Common myeloid progenitor, CD34-positive (primary cell): ENCODE measurements at regions of chr7 and their contacts with region 1.

Region 1: DNA sequence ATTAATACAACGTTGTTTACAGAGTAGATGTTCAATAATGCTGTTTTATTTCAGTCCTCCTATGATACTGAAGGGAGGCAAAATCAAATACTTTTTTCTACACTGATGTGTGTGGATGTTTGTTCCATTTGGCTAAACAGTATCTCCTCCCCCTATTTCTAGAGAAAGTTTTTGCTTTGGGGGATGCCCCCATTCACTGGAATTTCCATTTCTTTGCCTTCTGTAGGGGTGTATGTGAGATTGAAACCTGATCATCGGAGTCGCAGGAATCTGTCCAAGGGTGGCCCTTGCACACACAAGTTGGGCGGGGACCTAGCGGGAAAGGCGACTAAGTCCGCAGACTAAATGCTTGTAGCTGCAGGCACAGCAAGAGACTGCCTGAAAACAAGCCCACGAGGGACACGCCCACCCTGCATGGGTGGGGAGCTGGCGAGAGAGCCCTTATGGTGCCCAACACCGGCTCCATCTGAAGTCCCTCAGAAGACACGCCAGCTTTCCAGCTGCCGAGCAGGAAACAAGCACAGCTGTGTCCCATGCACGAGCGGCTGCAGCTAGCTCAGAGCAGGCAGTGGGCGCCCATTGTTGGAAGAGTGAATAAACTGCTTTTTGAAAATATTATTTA is 58.0 kb downstream of the ESYT2 start:
- DNase-seq: no peak
- H3K4me3 ChIP-seq: no peak overlapping the region
- H3K27ac ChIP-seq: no peak overlapping the region
- H3K4me1 ChIP-seq: no peaks in the 10 kb centered on the region
- H3K27me3 ChIP-seq: no peaks in the 10 kb centered on the region

Region 2: DNA sequence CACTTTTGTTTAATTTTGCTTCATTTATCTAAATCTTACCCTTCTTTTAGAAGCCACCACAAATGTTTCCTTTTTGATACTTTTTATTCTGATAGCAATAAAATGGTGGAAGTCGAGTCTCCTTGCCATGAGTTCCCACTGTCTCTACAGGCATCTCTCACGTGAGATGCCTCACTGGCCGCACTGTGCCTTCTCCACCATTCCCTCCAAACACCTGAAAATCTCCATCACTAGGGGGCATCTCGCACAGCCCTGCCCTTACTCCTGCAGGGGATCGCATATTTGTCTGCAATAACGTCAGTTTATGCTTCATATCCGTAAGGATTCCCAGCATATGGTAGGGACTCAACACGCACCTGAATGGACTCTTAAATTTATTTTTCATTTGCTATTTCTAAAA is 10.4 kb before region 1 on chr7:
- CTCF ChIA-PET with region 1: interaction called, 13 read pairs
- POLR2A ChIA-PET with region 1: no interaction called
- DNase-seq: no peak
- H3K4me3 ChIP-seq: no peak overlapping the region
- H3K27ac ChIP-seq: no peak overlapping the region
- H3K4me1 ChIP-seq: no peaks in the 10 kb centered on the region
- H3K27me3 ChIP-seq: no peaks in the 10 kb centered on the region